SK-N-SH (cell line): ENCODE measurements at regions of chr2 and their contacts with region 1.

Region 1: DNA sequence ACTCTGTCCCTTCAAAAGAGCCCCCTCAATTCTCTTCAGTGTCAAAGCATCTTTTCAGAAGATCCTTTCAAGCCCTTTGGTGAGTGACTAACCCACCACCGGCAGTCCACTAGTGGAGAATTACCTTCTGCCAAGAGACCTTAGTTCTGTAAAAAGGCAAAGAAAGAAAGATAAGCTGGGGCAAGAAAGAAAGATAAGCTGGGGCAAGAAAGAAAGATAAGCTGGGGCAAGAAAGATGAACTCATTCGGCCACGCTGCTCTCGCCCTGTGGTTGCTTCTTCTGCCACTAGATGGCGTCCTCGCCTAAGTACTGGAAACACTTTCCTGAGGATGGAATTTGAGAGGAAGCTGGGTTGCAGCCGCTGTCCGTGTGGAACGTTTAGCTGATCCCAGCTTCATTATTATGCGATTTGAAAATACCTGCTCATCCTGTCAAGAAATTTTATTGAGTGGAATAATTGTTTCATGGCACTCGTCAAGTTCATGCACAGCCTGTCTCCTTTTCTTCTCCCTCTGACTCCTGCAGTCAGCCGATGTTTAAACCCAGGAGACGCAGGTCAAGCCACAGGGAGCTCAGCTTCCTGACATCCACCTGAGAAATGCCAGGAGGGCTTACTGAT is 17.3 kb upstream of the ANXA4 start:
- DNase-seq: peak; percentile 75
- H3K4me3 ChIP-seq: peak overlapping the region; percentile 32 to 39
- H3K27ac ChIP-seq: no peak overlapping the region
- H3K4me1 ChIP-seq: peaks cover 0 to 15% of the 10 kb centered on the region in 2 experiments; a peak in 1 of 4 replicates
- H3K27me3 ChIP-seq: no peaks in the 10 kb centered on the region
- CTCF ChIP-seq: peak; percentile 94
- EP300 ChIP-seq: peak in 1 of 2 experiments; percentile 11; a peak in 1 of 4 replicates
- RAD21 ChIP-seq: peak; percentile 89

Region 2: DNA sequence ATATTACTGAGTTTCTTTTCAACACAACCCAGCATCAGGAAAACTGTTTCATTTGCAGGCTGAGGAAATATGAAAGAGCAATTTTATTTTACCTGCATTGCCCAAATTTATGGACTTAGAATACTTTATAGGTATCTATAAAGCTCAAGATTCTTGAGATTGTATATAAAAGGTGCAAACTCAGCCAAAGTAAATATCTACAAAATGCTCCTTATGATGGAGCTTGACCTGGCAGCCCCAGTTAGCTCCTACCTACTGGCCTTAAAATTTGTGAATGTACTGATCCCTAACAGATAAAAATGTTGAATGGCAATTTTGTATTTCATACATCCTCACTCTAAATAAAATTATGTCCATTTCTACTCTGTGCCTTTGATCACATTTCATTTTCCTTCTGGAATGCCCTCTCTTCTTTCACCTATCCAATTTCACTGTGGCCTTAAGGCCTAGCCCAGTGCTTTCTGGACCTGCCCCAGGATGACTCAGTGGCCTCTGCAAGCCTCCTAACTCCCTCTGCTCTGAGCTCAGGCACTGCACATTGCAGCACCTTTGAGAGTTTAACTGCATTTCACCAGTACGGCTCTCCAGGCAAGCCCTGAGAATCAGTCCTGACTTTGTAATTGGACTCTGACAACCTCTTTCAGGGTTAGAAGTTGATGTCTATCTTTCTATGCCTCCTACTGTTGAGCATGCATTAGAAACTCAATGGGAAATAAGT is 585.7 kb before region 1 on chr2:
- CTCF ChIA-PET with region 1: no interaction called
- POLR2A ChIA-PET with region 1: no interaction called
- DNase-seq: no peak
- H3K4me3 ChIP-seq: peak overlapping the region in 1 of 2 experiments; percentile 19; a peak in 1 of 4 replicates
- H3K27ac ChIP-seq: peak overlapping the region; percentile 78 to 89
- H3K4me1 ChIP-seq: peaks cover 5 to 30% of the 10 kb centered on the region in 2 experiments
- H3K27me3 ChIP-seq: no peaks in the 10 kb centered on the region
- CTCF ChIP-seq: no peak
- EP300 ChIP-seq: peak in 1 of 2 experiments; percentile 17; a peak in 1 of 4 replicates
- RAD21 ChIP-seq: no peak

Region 3: GRCh38 chr2:69645031-69645431 is 79.6 kb before region 1 on chr2:
- CTCF ChIA-PET with region 1: interaction called, 13 read pairs
- POLR2A ChIA-PET with region 1: interaction called, 5 read pairs
- DNase-seq: no peak
- H3K4me3 ChIP-seq: peak overlapping the region; percentile 84 to 93
- H3K27ac ChIP-seq: peak overlapping the region; percentile 98 to 100; a peak in 3 of 4 replicates
- H3K4me1 ChIP-seq: peaks cover 0 to 22% of the 10 kb centered on the region in 2 experiments; a peak in 2 of 4 replicates
- H3K27me3 ChIP-seq: no peaks in the 10 kb centered on the region
- CTCF ChIP-seq: no peak
- EP300 ChIP-seq: no peak
- RAD21 ChIP-seq: no peak

Region 4: GRCh38 chr2:69689969-69690368 is 34.7 kb before region 1 on chr2:
- CTCF ChIA-PET with region 1: no interaction called
- POLR2A ChIA-PET with region 1: no interaction called
- DNase-seq: no peak
- H3K4me3 ChIP-seq: no peak overlapping the region
- H3K27ac ChIP-seq: no peak overlapping the region
- H3K4me1 ChIP-seq: peaks cover 0 to 7% of the 10 kb centered on the region in 2 experiments; a peak in 2 of 4 replicates
- H3K27me3 ChIP-seq: no peaks in the 10 kb centered on the region
- CTCF ChIP-seq: no peak
- EP300 ChIP-seq: no peak
- RAD21 ChIP-seq: no peak

Region 5: GRCh38 chr2:69741619-69742466 is 17.2 kb after region 1 on chr2 and contains the start of gene ANXA4:
- CTCF ChIA-PET with region 1: interaction called, 79 read pairs
- POLR2A ChIA-PET with region 1: interaction called, 3 read pairs
- DNase-seq: peak; percentile 88
- H3K4me3 ChIP-seq: peak within 1 kb of the TSS; percentile 69 to 72
- H3K27ac ChIP-seq: peak within 1 kb of the TSS; percentile 80 to 84
- H3K4me1 ChIP-seq: peaks cover 0 to 10% of the 10 kb centered on the region in 2 experiments; a peak in 1 of 4 replicates
- H3K27me3 ChIP-seq: no peaks in the 10 kb centered on the region
- CTCF ChIP-seq: no peak
- EP300 ChIP-seq: no peak
- RAD21 ChIP-seq: no peak
- polyA plus RNA-seq, gene ANXA4: 93.2 and 137 TPM in 2 replicates

Region 6: GRCh38 chr2:69798909-69799526 is 74.4 kb after region 1 on chr2:
- CTCF ChIA-PET with region 1: interaction called, 37 read pairs
- POLR2A ChIA-PET with region 1: no interaction called
- DNase-seq: no peak
- H3K4me3 ChIP-seq: peak overlapping the region in 1 of 2 experiments; percentile 30; a peak in 2 of 4 replicates
- H3K27ac ChIP-seq: peak overlapping the region; percentile 65 to 66
- H3K4me1 ChIP-seq: peaks cover 14 to 17% of the 10 kb centered on the region in 2 experiments; a peak in 3 of 4 replicates
- H3K27me3 ChIP-seq: no peaks in the 10 kb centered on the region
- CTCF ChIP-seq: no peak
- EP300 ChIP-seq: no peak
- RAD21 ChIP-seq: no peak

Region 7: GRCh38 chr2:69816923-69817542 is 92.4 kb after region 1 on chr2:
- CTCF ChIA-PET with region 1: interaction called, 376 read pairs
- POLR2A ChIA-PET with region 1: interaction called, 4 read pairs
- DNase-seq: peak; percentile 39
- H3K4me3 ChIP-seq: no peak overlapping the region; a peak in 1 of 4 replicates
- H3K27ac ChIP-seq: no peak overlapping the region
- H3K4me1 ChIP-seq: peaks cover 0 to 3% of the 10 kb centered on the region in 2 experiments; a peak in 2 of 4 replicates
- H3K27me3 ChIP-seq: no peaks in the 10 kb centered on the region
- CTCF ChIP-seq: peak; percentile 93
- EP300 ChIP-seq: no peak
- RAD21 ChIP-seq: peak; percentile 76

Region 8: GRCh38 chr2:69836316-69836715 is 111.7 kb after region 1 on chr2:
- CTCF ChIA-PET with region 1: interaction called, 15 read pairs
- POLR2A ChIA-PET with region 1: no interaction called
- DNase-seq: no peak
- H3K4me3 ChIP-seq: no peak overlapping the region
- H3K27ac ChIP-seq: no peak overlapping the region; a peak in 1 of 4 replicates
- H3K4me1 ChIP-seq: peaks cover 3 to 4% of the 10 kb centered on the region in 2 experiments
- H3K27me3 ChIP-seq: no peaks in the 10 kb centered on the region
- CTCF ChIP-seq: no peak
- EP300 ChIP-seq: no peak
- RAD21 ChIP-seq: no peak

Region 9: GRCh38 chr2:70070541-70071268 is 346.1 kb after region 1 on chr2:
- CTCF ChIA-PET with region 1: interaction called, 10 read pairs
- POLR2A ChIA-PET with region 1: no interaction called
- DNase-seq: peak; percentile 85
- H3K4me3 ChIP-seq: no peak overlapping the region
- H3K27ac ChIP-seq: peak overlapping the region; percentile 43 to 72
- H3K4me1 ChIP-seq: no peaks in the 10 kb centered on the region; a peak in 1 of 4 replicates
- H3K27me3 ChIP-seq: no peaks in the 10 kb centered on the region
- CTCF ChIP-seq: peak; percentile 80
- EP300 ChIP-seq: no peak
- RAD21 ChIP-seq: peak; percentile 81